ENCODE measurements at regions of chr4 and their contacts with region 1.

Region 1: GRCh38 chr4:113908829-113909228 is 70.6 kb downstream of the ARSJ start:
- DNase-seq: peak in 5 of 9 donors; percentile 10 to 31 (median 26)
- ATAC-seq: no peak
- H3K4me3 ChIP-seq: no peak overlapping the region
- H3K4me3 Mint-ChIP-seq: no peak overlapping the region
- H3K27ac ChIP-seq: no peak overlapping the region
- H3K27ac Mint-ChIP-seq: peak overlapping the region in 2 of 9 donors; percentile 2 to 7
- H3K4me1 ChIP-seq: peaks cover 12 to 24% of the 10 kb centered on the region in 2 donors
- H3K4me1 Mint-ChIP-seq: peaks cover 6 to 57% (median 46%) of the 10 kb centered on the region in 7 donors
- H3K27me3 ChIP-seq: no peaks in the 10 kb centered on the region
- H3K27me3 Mint-ChIP-seq: no peaks in the 10 kb centered on the region

Region 2: DNA sequence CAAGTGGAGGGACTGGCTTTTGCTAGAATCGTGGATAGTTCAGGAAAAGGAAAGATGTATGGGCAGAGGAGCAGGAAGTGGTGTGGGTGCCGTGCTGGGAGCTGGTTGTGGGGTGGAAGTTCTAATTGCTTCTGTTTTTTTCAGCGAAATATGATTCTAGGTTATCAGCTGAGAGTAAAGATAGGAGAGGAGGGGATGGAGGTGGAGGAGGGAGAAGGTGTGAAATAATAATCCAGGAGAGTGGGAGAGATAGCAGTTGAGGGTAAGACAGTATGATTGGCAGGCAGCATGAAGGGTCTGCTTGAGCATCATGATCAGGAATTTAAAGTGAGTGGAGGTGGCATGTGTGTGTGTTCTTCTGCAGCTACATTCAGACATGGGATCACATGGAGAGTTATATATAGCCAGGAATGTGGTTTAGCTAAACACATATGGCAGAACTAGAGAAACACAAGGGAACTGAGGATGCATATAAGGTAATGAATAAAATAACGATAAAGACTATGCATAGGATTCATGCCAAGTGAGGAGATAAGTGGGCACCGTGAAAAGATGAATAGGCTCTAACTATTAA is 725.7 kb before region 1 on chr4:
- CTCF ChIA-PET with region 1: no interaction called
- POLR2A ChIA-PET with region 1: no interaction called
- intact Hi-C with region 1: no loop called
- DNase-seq: no peak
- ATAC-seq: no peak
- H3K4me3 ChIP-seq: no peak overlapping the region
- H3K4me3 Mint-ChIP-seq: no peak overlapping the region
- H3K27ac ChIP-seq: no peak overlapping the region
- H3K27ac Mint-ChIP-seq: no peak overlapping the region
- H3K4me1 ChIP-seq: no peaks in the 10 kb centered on the region
- H3K4me1 Mint-ChIP-seq: no peaks in the 10 kb centered on the region
- H3K27me3 ChIP-seq: no peaks in the 10 kb centered on the region
- H3K27me3 Mint-ChIP-seq: peaks cover 0 to 13% (median 0%) of the 10 kb centered on the region in 5 donors

Region 3: DNA sequence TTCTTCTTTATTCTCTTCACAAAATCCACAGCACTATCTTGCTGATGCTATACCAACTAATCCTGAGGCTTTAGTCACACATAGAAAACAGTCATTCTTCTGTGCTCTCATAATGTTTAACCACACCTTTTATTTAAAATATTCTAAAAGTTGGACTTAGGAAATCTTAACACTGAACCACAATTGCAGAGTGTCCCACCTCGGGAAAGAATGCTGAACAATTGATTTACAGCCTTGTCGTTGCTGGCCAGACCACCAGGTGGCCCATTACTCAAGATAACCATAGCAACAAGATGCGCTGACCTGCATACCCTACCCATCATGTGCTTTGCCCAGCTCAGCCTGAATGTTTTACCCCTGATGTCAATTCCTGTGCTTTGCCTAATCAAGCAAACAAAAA is 30.2 kb before region 1 on chr4:
- CTCF ChIA-PET with region 1: interaction called, 3 read pairs
- POLR2A ChIA-PET with region 1: interaction called, 3 read pairs
- intact Hi-C with region 1: loop called in 1 of 2 experiments (anchors 1 kb)
- DNase-seq: no peak
- ATAC-seq: no peak
- H3K4me3 ChIP-seq: no peak overlapping the region
- H3K4me3 Mint-ChIP-seq: no peak overlapping the region
- H3K27ac ChIP-seq: no peak overlapping the region
- H3K27ac Mint-ChIP-seq: no peak overlapping the region
- H3K4me1 ChIP-seq: no peaks in the 10 kb centered on the region
- H3K4me1 Mint-ChIP-seq: peaks cover 2 to 38% (median 17%) of the 10 kb centered on the region in 7 donors
- H3K27me3 ChIP-seq: no peaks in the 10 kb centered on the region
- H3K27me3 Mint-ChIP-seq: no peaks in the 10 kb centered on the region

Region 4: DNA sequence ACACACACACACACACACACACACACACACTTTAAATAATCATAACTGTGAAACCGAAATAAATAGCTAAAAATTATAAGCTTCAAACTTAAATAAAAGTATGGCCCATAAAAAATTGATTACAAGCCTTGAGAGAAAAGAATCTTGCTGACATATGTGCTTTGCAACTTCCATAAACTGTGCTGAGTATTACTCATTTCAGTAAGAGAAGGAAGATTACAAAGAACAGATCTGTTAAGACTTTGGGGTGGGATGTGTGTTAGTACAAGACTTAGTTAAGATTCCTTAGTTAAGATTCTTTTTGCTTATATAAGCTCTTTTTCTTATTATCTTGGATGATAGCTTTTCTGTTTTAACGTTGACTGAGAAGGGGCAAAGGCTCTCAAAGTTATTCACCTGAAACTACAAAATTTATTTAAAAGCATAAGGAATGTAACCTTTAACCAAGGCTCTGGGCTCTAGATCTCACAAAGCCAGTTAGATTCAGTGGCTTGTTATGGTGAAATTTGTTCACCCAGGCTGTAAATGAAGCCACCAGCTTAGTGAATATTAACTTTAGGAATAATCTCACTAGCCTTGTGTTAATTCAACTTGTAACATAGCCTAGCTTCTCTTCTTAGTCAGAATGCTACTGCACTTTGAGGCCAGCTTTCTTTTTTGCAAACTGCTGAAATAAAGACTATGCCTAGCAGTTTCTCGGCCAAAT is 12.4 kb after region 1 on chr4:
- CTCF ChIA-PET with region 1: no interaction called
- POLR2A ChIA-PET with region 1: interaction called, 4 read pairs
- intact Hi-C with region 1: loop called in 1 of 2 experiments (anchors 1 kb)
- DNase-seq: no peak
- ATAC-seq: no peak
- H3K4me3 ChIP-seq: no peak overlapping the region
- H3K4me3 Mint-ChIP-seq: no peak overlapping the region
- H3K27ac ChIP-seq: no peak overlapping the region
- H3K27ac Mint-ChIP-seq: no peak overlapping the region
- H3K4me1 ChIP-seq: no peaks in the 10 kb centered on the region
- H3K4me1 Mint-ChIP-seq: peaks cover 0 to 6% (median 0%) of the 10 kb centered on the region in 7 donors
- H3K27me3 ChIP-seq: no peaks in the 10 kb centered on the region
- H3K27me3 Mint-ChIP-seq: no peaks in the 10 kb centered on the region